B cell (primary cell): ENCODE measurements at regions of chr11 and their contacts with region 1.

Region 1: DNA sequence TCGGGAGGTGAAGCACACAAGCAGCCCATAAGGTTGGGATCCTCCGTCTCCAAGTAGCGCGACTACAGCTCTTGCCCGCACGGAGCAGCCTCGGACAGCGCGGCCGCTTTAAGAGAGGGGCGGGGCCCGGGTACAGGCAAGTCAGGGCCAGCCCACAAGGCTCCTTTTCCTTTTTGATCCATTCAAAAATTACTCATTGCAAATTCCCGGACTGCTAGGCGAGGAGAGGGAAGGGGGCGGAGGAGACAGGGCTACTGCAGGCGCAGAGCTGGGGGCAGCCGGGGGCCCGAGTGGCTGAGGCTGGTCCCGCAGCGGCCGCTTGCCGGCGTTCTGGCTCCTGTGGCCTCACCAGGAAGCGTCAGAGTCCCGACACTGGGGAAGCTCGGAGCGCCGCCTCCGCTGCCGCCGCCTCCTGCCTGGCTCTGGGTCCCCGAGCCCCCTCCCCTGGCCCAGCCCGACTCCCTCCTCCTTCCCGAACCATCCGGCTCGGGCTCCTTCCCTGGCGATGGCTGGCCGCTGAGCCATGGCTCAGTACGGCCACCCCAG is at the start of gene UBASH3B:
- DNase-seq: peak; percentile 75
- ATAC-seq: peak; percentile 76
- H3K4me3 ChIP-seq: peak within 1 kb of the TSS; percentile 53 to 86 (median 75)
- H3K4me3 Mint-ChIP-seq: peak within 1 kb of the TSS; percentile 91
- H3K27ac ChIP-seq: peak within 1 kb of the TSS; percentile 19 to 62
- H3K27ac Mint-ChIP-seq: peak within 1 kb of the TSS; percentile 71
- H3K4me1 ChIP-seq: peaks cover 21 to 25% of the 10 kb centered on the region in 2 donors
- H3K4me1 Mint-ChIP-seq: peaks cover 31% of the 10 kb centered on the region
- H3K27me3 ChIP-seq: peaks cover 0 to 24% (median 13%) of the 10 kb centered on the region in 4 experiments
- H3K27me3 Mint-ChIP-seq: peaks cover 21% of the 10 kb centered on the region
- CTCF ChIP-seq: no peak
- total RNA-seq, gene UBASH3B: 3.6 and 4.2 TPM in 2 replicates

Region 2: GRCh38 chr11:122697636-122698167 is 42.1 kb after region 1 on chr11:
- CTCF ChIA-PET with region 1: interaction called, 3 read pairs
- POLR2A ChIA-PET with region 1: interaction called, 3 read pairs
- intact Hi-C with region 1: loop called (anchors 5 kb)
- DNase-seq: peak; percentile 71
- ATAC-seq: peak; percentile 90
- H3K4me3 ChIP-seq: peak overlapping the region in 4 of 5 experiments; percentile 3 to 34 (median 18)
- H3K4me3 Mint-ChIP-seq: peak overlapping the region; percentile 83
- H3K27ac ChIP-seq: peak overlapping the region; percentile 14 to 74
- H3K27ac Mint-ChIP-seq: peak overlapping the region; percentile 81
- H3K4me1 ChIP-seq: peaks cover 51 to 59% of the 10 kb centered on the region in 2 donors
- H3K4me1 Mint-ChIP-seq: peaks cover 60% of the 10 kb centered on the region
- H3K27me3 ChIP-seq: peaks cover 0 to under 1% (median 0%) of the 10 kb centered on the region in 4 experiments
- H3K27me3 Mint-ChIP-seq: no peaks in the 10 kb centered on the region
- CTCF ChIP-seq: no peak

Region 3: DNA sequence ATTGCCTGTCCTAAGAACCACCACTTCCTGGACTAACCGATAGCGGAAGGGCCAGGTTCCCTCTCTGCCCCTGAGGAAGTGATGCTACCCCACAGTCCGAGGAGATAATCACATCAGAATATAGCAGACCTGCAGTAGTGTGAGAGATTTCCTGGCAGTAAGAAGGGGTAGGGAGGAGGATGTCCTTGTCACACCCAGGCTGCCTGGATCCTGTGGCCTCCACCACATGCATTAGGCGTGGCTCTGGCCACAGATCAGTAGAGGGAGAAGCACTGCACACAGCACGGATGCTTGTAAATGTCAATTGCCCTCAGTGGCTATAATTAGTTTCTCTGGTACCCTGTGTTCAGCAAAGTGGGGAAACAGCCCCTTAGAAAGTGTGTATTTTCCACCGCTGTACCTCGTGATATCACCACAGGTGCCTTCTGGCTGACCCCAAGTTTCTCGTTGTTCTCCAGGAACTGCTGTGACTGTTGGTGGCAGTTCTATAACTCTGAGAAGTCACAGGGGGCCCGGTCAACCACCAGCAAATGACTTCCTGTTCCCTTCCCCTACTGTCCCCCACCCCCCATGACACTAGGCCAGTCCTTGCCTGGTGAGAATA is 61.8 kb after region 1 on chr11:
- CTCF ChIA-PET with region 1: interaction called, 4 read pairs
- POLR2A ChIA-PET with region 1: no interaction called
- intact Hi-C with region 1: loop called (anchors 5 kb)
- DNase-seq: peak; percentile 86
- ATAC-seq: peak; percentile 73
- H3K4me3 ChIP-seq: peak overlapping the region in 2 of 5 experiments; percentile 6 to 12
- H3K4me3 Mint-ChIP-seq: peak overlapping the region; percentile 74
- H3K27ac ChIP-seq: peak overlapping the region; percentile 62 to 76
- H3K27ac Mint-ChIP-seq: peak overlapping the region; percentile 83
- H3K4me1 ChIP-seq: peaks cover 73 to 76% of the 10 kb centered on the region in 2 donors
- H3K4me1 Mint-ChIP-seq: peaks cover 77% of the 10 kb centered on the region
- H3K27me3 ChIP-seq: peaks cover 0 to 11% (median 2%) of the 10 kb centered on the region in 4 experiments
- H3K27me3 Mint-ChIP-seq: peaks cover 6% of the 10 kb centered on the region
- CTCF ChIP-seq: no peak